Dendritic cell treated with granulocyte-macrophage colony-stimulating factor and Interleukin-4, amounts not matched to agents 40 ng/mL and 50 ng/mL, for 4 days (primary cell): ENCODE measurements at regions of chr20 and their contacts with region 1.

Region 1: DNA sequence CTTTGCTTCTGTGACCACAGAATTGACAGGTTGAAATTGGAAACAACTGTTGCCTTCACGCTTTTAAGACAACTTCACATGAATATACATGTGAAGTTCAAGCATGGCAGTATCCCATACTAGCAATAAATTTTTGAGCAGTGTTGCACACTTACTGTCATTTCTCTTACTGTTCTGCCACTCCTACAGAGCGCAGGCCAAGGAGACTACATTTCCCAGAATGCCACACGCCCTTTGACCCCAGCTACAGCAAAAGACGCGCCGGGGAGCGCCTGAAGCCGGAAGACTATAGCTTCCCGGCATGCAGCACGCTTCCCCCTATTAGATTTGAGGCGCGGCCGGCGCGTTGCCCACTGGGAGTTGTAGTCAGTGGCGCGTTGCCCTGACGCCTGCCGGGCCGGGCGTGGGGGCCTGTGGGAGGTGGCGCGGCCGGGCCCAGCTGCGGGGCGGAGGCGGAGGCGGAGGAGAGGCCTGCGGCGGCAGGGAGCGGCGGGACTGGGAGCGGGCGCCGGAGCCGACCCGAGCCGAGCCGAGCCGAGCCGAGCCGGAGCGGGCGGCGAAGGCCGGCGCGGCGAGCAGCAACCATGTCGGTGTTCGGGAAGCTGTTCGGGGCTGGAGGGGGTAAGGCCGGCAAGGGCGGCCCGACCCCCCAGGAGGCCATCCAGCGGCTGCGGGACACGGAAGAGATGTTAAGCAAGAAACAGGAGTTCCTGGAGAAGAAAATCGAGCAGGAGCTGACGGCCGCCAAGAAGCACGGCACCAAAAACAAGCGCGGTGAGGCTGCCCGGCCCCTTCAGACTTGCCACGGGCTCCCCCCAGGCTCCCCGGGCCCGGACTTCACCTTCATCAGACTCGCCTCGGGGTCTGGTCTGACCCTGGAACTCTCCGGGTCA is at the start of gene CHMP4B:
- H3K4me3 Mint-ChIP-seq: peak within 1 kb of the TSS; percentile 97
- H3K27ac Mint-ChIP-seq: peak within 1 kb of the TSS; percentile 99
- H3K4me1 Mint-ChIP-seq: peaks cover 51% of the 10 kb centered on the region
- H3K27me3 Mint-ChIP-seq: no peaks in the 10 kb centered on the region

Region 2: GRCh38 chr20:33753763-33754162 is 57.4 kb before region 1 on chr20:
- intact Hi-C with region 1: no loop called
- H3K4me3 Mint-ChIP-seq: no peak overlapping the region
- H3K27ac Mint-ChIP-seq: no peak overlapping the region
- H3K4me1 Mint-ChIP-seq: no peaks in the 10 kb centered on the region
- H3K27me3 Mint-ChIP-seq: no peaks in the 10 kb centered on the region

Region 3: GRCh38 chr20:33992923-33993575 is 181.9 kb after region 1 on chr20:
- intact Hi-C with region 1: loop called (anchors 2 kb)
- H3K4me3 Mint-ChIP-seq: peak overlapping the region; percentile 94
- H3K27ac Mint-ChIP-seq: peak overlapping the region; percentile 95
- H3K4me1 Mint-ChIP-seq: peaks cover 52% of the 10 kb centered on the region
- H3K27me3 Mint-ChIP-seq: no peaks in the 10 kb centered on the region

Region 4: GRCh38 chr20:34111702-34112599 is 300.8 kb after region 1 on chr20 and contains the start of gene EIF2S2:
- intact Hi-C with region 1: loop called (anchors 1 kb)
- H3K4me3 Mint-ChIP-seq: peak within 1 kb of the TSS; percentile 96
- H3K27ac Mint-ChIP-seq: peak within 1 kb of the TSS; percentile 91
- H3K4me1 Mint-ChIP-seq: peaks cover 40% of the 10 kb centered on the region
- H3K27me3 Mint-ChIP-seq: no peaks in the 10 kb centered on the region